BJ (cell line): ENCODE measurements at regions of chr11 and their contacts with region 1.

Region 1: GRCh38 chr11:113305440-113306336 is 8.7 kb upstream of the TTC12 start:
- DNase-seq: no peak
- H3K4me3 ChIP-seq: no peak overlapping the region
- H3K27me3 ChIP-seq: 0 out of 2 replicates have a peak, but pooled peaks cover 3% of the 10 kb centered on the region
- CTCF ChIP-seq: peak; percentile 96

Region 2: GRCh38 chr11:113289431-113290187 is 16.1 kb before region 1 on chr11:
- CTCF ChIA-PET with region 1: interaction called, 11 read pairs
- POLR2A ChIA-PET with region 1: no interaction called
- DNase-seq: no peak
- H3K4me3 ChIP-seq: no peak overlapping the region
- H3K27me3 ChIP-seq: peaks cover 8% of the 10 kb centered on the region
- CTCF ChIP-seq: peak; percentile 97

Region 3: GRCh38 chr11:113730887-113731726 is 425.4 kb after region 1 on chr11:
- CTCF ChIA-PET with region 1: interaction called, 89 read pairs
- POLR2A ChIA-PET with region 1: no interaction called
- DNase-seq: peak; percentile 9
- H3K4me3 ChIP-seq: no peak overlapping the region
- H3K27me3 ChIP-seq: no peaks in the 10 kb centered on the region
- CTCF ChIP-seq: peak; percentile 68